ENCODE measurements at regions of chr2 and their contacts with region 1.

Region 1: DNA sequence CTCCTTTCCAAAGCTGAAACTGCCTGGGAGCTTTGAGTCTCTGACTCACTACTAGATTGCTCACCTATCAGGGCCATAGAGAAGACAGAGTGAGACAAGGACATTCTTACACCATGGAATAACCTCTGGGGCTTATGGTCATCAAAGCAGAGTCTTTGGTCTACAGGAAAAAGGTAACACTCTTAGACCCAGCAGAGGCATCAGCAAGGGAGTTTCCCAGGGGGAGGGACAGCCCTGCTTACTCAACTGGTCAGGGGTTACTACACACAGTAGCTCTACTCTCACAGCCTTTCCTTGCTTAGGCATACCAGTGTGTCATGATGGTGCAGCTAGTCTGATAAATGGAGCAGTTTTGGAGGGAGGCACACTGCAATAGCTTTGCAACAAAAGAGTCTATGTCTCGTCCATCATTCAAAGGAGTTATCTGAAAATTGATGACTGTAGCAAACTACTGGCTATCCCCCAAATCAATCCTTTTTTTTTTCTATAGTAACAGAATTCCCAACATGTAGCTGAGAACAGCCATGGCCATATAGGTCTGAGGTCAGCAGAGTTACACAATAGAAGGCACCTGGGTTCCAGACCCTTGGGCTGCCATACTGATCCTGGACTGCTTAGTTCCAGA is 22.4 kb upstream of the CD28 start:
- DNase-seq: peak in 1 of 3 donors; percentile 33
- ATAC-seq: peak in 1 of 2 donors; percentile 47
- H3K4me3 ChIP-seq: no peak overlapping the region
- H3K27ac ChIP-seq: peak overlapping the region; percentile 96
- H3K4me1 ChIP-seq: peaks cover 22% of the 10 kb centered on the region
- H3K27me3 ChIP-seq: no peaks in the 10 kb centered on the region

Region 2: DNA sequence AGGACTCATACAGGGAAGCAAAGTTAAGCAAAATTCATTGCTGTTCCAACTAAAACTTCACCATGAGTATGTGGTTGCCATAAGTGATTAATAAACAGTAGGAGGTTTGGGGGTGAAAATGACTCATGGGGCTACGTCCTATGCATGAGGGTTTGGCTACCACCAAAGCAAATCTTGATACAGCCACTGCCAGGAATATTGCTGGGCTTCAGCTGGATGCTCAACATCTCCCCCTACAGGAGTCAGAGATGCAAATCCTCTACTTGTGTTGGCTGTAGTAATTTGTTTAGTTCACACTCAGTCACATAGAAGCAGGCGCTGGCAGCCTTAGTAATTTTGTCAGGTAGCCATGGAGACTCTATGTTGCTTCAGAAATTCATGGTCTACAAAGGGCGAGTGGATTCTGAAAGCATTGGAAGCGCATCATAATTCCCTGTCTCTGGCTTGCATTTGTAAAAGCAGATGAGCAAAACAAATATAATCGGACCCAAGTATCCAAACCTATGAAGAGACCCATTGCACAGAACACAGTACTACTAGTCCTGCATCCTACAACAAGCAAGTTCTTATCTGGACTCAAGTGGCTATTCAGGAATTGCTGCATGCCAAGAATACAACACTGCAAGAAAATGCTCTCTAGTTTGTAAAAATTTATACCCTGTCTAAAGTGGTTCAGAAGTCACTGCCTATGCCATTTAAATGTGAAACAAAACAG is 98.4 kb after region 1 on chr2:
- intact Hi-C with region 1: loop called in 1 of 4 experiments (anchors 10 kb)
- DNase-seq: peak; percentile 33 to 66 (median 48)
- ATAC-seq: peak; percentile 79 to 89
- H3K4me3 ChIP-seq: no peak overlapping the region
- H3K27ac ChIP-seq: no peak overlapping the region
- H3K4me1 ChIP-seq: peaks cover 3% of the 10 kb centered on the region
- H3K27me3 ChIP-seq: no peaks in the 10 kb centered on the region

Region 3: DNA sequence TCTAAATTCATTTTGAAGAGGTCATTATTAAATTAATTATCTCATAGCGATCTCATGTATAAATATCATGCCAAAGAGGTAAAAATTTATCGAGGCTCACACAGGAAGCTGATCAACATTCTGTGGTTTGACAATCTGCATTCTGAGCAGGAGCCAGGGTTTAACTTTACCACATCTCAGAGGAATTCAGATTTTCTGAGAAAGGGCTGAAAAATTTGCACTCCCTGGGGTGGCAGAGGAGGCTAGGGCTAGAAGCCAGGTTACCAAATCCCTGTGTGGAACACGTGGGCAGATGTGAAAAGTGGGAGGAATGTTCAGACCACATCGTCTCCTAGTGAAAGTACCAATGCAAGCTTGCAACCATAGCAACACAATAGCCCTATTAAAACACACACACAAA is 120.0 kb after region 1 on chr2:
- intact Hi-C with region 1: loop called in 1 of 4 experiments (anchors 10 kb)
- DNase-seq: peak in 2 of 3 donors; percentile 46 to 57
- ATAC-seq: peak; percentile 77 to 85
- H3K4me3 ChIP-seq: no peak overlapping the region
- H3K27ac ChIP-seq: no peak overlapping the region
- H3K4me1 ChIP-seq: peaks cover 1% of the 10 kb centered on the region
- H3K27me3 ChIP-seq: no peaks in the 10 kb centered on the region